Dendritic cell treated with granulocyte-macrophage colony-stimulating factor and Interleukin-4, amounts not matched to agents 40 ng/mL and 50 ng/mL, for 4 days (primary cell): ENCODE measurements at regions of chr6 and their contacts with region 1.

Region 1: DNA sequence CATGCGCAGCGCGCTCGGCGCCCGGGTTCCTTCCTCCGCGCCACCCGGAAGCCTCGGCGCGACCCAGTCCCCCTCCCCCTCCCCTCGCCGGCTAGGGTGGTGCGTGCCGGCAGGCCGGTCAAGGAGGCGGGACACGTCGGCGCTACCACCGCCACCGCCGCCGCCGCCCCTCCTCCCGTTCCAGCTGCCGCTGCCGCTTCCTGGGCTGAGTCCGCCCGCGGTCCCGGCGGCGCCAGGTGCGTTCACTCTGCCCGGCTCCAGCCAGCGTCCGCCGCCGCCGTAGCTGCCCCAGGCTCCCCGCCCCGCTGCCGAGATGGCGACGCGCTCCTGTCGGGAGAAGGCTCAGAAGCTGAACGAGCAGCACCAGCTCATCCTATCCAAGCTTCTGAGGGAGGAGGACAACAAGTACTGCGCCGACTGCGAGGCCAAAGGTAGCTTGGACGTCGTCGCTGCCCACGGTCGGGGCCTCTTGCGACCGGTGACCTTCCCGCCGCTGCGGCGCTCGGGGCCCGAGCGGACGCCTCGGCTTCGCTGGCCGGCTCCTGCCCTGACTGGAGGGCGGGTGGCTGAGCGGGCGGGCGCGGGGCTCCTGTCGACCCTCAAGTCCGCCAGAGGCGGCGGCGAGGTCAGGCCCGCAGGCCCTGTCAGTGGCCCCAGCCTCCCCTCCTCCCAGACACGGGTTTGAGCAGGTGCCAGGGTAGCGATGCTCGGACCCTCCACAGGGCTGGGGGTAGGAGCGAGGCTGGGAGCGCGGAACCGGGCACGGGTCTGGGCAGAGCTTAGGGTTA is at the start of gene SMAP1:
- H3K4me3 Mint-ChIP-seq: peak within 1 kb of the TSS; percentile 87
- H3K27ac Mint-ChIP-seq: peak within 1 kb of the TSS; percentile 93
- H3K4me1 Mint-ChIP-seq: peaks cover 56% of the 10 kb centered on the region
- H3K27me3 Mint-ChIP-seq: no peaks in the 10 kb centered on the region

Region 2: DNA sequence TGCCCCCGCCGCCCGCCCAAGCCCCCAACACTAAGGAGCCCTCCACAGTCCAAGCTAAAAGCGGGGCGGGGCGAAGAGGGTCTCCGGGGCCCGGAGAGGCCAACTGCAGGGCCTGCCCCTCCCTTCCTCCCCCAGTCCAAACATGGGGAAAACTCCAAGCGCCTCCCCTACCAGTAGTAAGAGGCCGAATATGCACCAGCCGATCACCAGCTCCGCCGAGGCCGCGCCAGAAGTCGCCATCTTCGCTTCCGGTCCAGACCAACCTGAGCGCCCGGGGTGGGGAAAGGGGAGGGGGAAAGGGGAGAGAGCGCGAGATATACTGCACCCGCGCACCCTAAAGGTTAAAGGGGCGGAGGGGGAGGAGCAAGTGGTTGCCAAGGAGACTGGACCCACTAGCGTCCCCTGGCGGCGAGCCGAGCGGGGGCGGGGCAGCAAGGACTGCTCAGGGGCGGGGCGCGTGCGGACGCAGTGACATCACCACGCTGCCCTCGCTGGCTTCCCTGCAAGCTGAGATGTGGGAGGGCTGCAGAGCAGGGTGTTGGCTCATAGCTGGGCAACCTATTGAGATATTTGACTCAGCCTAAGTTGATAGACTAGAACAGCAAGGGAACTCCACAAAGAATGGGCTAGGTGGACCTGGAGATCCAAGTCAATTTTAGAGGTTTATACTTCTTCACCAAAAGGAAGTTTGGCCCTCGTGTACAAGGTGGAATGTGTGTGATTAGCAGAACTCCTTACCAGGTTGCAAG is 871.1 kb before region 1 on chr6 and contains the start of gene LMBRD1:
- intact Hi-C with region 1: loop called (anchors 10 kb)
- H3K4me3 Mint-ChIP-seq: peak within 1 kb of the TSS; percentile 90
- H3K27ac Mint-ChIP-seq: peak within 1 kb of the TSS; percentile 93
- H3K4me1 Mint-ChIP-seq: peaks cover 38% of the 10 kb centered on the region
- H3K27me3 Mint-ChIP-seq: no peaks in the 10 kb centered on the region

Region 3: DNA sequence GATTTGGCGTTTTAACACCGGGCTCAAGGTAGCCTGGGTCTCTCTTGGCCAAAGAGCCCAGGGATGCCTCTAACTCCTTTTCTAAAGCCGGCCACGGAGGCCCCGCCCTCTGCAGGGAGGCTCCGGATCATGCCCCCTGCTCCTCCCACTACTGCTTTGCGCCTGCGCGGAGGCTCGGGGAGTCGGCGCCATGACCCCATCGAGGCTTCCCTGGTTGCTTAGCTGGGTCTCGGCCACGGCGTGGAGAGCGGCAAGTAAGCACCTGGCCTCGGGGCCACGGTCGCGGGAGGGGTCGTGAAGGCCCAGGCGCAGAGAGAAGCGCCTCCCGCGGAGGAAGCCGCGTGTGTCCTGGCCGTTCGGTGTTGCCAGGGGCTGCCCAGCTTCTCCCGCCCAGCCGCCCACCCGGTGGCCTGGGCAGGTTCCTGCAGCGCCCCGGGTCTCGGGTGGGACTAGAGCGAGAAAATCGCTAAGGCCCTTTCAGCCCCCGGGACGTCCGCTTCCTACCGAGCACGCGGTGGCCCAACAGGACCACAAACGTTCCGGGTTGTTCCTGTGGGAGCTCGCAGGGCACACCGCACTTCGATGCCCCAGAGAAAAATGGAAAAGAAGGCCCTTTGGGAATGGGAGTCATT is 101.0 kb before region 1 on chr6 and contains the start of gene SDHAF4:
- intact Hi-C with region 1: loop called (anchors 5 kb)
- H3K4me3 Mint-ChIP-seq: peak within 1 kb of the TSS; percentile 76
- H3K27ac Mint-ChIP-seq: peak within 1 kb of the TSS; percentile 81
- H3K4me1 Mint-ChIP-seq: peaks cover 5% of the 10 kb centered on the region
- H3K27me3 Mint-ChIP-seq: no peaks in the 10 kb centered on the region